ENCODE measurements at regions of chr2 and their contacts with region 1.

Region 1: DNA sequence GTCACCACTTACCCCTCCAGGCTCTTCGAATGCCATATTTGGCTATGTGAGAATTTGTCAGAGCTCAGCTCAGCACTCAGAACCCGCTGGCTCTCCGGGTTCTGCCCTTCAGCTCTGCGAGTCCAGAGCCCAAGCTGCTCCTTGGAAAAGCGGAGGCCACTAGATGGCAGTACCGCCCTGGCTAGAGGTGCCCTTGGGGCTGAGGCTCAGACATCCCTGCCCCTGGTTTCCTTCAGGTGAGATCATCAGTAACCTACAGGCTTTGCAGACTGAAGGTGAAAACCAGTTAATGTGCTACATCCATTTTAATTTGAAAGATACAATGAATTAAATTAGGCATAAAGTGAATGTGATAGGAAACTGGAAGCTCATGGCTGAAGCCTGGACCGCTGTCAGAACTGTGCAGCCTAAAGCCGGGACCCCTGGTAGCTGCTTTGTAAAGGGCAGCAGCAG is 285.6 kb downstream of the AGAP1 start:
- DNase-seq: no peak
- H3K4me3 ChIP-seq: no peak overlapping the region
- H3K27me3 ChIP-seq: no peaks in the 10 kb centered on the region
- CTCF ChIP-seq: peak; percentile 94

Region 2: GRCh38 chr2:235766278-235766677 is 13.2 kb before region 1 on chr2:
- CTCF ChIA-PET with region 1: interaction called, 28 read pairs
- POLR2A ChIA-PET with region 1: no interaction called
- DNase-seq: peak; percentile 57
- H3K4me3 ChIP-seq: no peak overlapping the region
- H3K27me3 ChIP-seq: no peaks in the 10 kb centered on the region
- CTCF ChIP-seq: peak; percentile 82

Region 3: DNA sequence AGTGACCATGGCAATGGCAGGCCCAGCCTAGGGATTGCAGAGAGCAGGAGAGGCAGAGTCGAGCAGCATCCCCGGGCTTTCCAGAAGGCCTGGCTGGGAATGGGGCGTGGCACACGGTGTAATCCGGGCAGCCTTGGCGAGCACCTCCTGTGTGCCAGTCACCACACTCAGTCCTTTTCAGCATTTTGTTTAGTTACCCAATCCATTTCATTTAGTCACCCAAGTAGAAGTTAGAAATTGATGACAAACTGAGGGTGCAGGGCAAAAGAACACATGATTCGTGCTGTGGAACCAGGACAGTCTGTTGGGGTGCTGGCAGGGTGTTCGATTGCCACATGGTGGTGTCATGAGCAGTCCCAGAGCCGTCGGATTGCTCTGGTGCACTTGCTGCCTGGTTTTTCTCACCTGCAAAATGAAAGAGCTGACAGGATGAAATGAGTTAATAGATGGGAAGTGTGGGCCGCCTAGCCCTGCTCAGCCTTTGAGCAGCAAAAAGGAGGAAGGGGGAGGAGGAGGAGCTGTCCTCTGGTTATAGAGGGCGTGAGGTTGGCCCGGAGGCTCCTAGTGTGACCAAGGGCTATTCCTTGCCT is 13.8 kb after region 1 on chr2:
- CTCF ChIA-PET with region 1: interaction called, 64 read pairs
- POLR2A ChIA-PET with region 1: no interaction called
- DNase-seq: no peak
- H3K4me3 ChIP-seq: no peak overlapping the region
- H3K27me3 ChIP-seq: no peaks in the 10 kb centered on the region
- CTCF ChIP-seq: peak; percentile 29; the same call in 1 of the 2 replicates

Region 4: DNA sequence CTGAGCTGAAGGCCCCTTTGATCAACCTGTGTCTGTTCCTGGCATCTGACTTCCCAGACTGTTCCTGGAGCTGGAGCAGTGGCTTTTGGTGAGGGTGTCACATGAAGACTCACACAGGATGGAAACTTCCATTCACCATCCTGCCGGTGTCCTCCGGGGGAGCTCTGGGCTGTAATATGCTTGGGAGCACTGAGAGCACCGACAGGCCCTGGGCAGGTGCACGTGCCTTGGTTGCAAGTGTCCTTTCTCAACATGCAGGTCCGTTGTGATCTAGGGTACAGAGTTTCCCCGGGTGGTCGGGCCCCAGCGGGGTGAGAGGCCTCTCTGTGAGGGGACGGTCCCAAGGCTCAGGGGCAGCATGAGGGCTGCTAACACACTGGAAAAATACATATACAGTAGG is 413.6 kb after region 1 on chr2:
- CTCF ChIA-PET with region 1: interaction called, 21 read pairs
- POLR2A ChIA-PET with region 1: no interaction called
- DNase-seq: no peak
- H3K4me3 ChIP-seq: no peak overlapping the region
- H3K27me3 ChIP-seq: no peaks in the 10 kb centered on the region
- CTCF ChIP-seq: no peak